Dendritic cell treated with granulocyte-macrophage colony-stimulating factor and Interleukin-4, amounts not matched to agents 40 ng/mL and 50 ng/mL, for 4 days (primary cell): ENCODE measurements at regions of chr5 and their contacts with region 1.

Region 1: DNA sequence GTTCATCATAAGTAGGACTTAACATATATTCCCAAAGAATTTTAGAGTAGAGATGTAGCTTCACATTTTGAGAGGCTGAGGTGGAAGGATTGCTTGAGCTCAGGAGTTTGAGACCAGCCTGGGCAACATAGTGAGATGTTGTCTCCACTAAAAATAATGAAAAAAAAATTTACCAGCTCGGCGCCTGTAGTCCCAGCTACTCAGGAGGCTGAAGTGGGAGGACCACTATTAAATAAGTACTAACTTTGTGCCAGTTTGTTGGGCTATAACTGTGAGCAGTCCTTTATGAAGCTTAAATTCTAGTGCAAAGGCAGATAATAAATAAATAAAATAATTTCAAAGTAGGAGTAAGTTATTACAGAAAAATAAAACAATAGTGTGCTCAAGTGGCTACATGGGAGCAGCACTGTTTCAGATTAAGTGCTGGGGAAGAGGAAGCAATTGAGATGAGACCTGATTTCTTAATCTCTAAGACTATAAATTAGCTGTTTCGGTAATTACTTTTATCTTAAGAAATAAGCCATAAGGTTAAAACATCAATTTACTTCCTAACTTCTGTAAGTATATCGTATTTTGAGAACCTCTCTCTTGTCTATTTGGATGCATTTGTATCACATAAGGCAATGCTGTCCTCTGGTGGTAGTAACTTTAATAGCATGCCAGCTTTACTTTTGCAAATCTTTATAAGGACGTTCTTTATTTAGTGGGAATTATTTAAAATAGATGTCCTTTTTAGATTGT is 98.9 kb downstream of the CSNK1G3 start:
- H3K4me3 Mint-ChIP-seq: no peak overlapping the region
- H3K27ac Mint-ChIP-seq: no peak overlapping the region
- H3K4me1 Mint-ChIP-seq: peaks cover 9% of the 10 kb centered on the region
- H3K27me3 Mint-ChIP-seq: no peaks in the 10 kb centered on the region

Region 2: DNA sequence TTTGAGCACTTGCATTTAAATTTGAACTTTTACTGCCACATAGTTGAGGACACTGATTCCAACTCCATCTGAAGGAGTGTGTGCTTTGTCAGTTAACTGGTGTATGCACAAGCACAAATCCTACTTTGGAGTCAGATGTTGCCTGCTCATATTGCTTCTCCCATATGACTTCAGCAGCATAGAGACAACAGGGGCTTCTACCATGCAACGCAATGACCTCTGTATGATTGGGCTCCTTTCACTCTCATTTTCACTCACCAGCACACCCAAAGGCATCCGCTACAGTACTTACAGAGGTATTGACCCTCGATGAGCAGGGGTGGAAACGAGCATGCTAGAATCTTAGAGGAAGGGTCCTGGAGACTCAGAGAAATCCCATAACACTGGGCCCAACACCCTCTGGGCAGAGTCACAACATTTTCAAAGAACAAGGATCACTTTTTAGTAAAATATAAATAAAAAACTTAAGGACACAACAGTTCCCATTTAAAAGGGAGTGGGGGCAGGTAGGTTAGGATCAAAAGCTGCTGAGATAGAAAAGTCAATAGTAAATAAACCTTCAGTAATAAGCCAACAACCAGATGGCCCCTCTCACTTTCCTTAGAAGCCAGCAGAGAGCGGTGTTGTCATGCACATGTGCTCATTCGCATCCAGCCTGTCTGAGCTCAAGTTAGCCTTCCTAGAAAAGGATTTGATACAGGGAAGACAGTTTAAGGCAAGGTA is 1095.0 kb before region 1 on chr5:
- intact Hi-C with region 1: loop called (anchors 5 kb)
- H3K4me3 Mint-ChIP-seq: no peak overlapping the region
- H3K27ac Mint-ChIP-seq: no peak overlapping the region
- H3K4me1 Mint-ChIP-seq: no peaks in the 10 kb centered on the region
- H3K27me3 Mint-ChIP-seq: no peaks in the 10 kb centered on the region

Region 3: DNA sequence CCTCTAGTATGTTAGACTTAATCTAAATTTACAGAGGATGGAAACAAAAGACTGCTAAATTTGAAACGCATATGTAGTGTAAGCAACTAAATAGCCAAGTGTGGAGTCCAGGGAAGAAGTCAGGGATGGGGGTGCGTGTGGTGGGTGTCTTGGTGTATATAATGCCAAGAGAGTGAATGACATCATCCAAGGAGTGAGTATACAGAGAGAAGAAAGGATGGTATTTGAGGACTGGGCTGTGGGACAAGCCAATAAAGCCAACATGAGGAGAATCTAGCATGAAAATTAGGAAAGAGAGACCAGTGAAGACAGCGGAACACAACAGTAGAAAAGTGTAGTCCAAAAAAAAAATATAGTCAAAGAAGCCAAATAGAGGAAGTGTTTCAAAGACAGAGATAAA is 232.1 kb before region 1 on chr5:
- intact Hi-C with region 1: loop called (anchors 5 kb)
- H3K4me3 Mint-ChIP-seq: no peak overlapping the region
- H3K27ac Mint-ChIP-seq: no peak overlapping the region
- H3K4me1 Mint-ChIP-seq: no peaks in the 10 kb centered on the region
- H3K27me3 Mint-ChIP-seq: no peaks in the 10 kb centered on the region

Region 4: GRCh38 chr5:123423278-123424149 is 187.3 kb before region 1 on chr5 and contains the start of gene CEP120:
- intact Hi-C with region 1: loop called (anchors 5 kb)
- H3K4me3 Mint-ChIP-seq: no peak within 1 kb of the TSS
- H3K27ac Mint-ChIP-seq: no peak within 1 kb of the TSS
- H3K4me1 Mint-ChIP-seq: peaks cover 18% of the 10 kb centered on the region
- H3K27me3 Mint-ChIP-seq: no peaks in the 10 kb centered on the region

Region 5: GRCh38 chr5:123690821-123691220 is 80.0 kb after region 1 on chr5:
- intact Hi-C with region 1: no loop called
- H3K4me3 Mint-ChIP-seq: no peak overlapping the region
- H3K27ac Mint-ChIP-seq: no peak overlapping the region
- H3K4me1 Mint-ChIP-seq: no peaks in the 10 kb centered on the region
- H3K27me3 Mint-ChIP-seq: no peaks in the 10 kb centered on the region

Region 6: DNA sequence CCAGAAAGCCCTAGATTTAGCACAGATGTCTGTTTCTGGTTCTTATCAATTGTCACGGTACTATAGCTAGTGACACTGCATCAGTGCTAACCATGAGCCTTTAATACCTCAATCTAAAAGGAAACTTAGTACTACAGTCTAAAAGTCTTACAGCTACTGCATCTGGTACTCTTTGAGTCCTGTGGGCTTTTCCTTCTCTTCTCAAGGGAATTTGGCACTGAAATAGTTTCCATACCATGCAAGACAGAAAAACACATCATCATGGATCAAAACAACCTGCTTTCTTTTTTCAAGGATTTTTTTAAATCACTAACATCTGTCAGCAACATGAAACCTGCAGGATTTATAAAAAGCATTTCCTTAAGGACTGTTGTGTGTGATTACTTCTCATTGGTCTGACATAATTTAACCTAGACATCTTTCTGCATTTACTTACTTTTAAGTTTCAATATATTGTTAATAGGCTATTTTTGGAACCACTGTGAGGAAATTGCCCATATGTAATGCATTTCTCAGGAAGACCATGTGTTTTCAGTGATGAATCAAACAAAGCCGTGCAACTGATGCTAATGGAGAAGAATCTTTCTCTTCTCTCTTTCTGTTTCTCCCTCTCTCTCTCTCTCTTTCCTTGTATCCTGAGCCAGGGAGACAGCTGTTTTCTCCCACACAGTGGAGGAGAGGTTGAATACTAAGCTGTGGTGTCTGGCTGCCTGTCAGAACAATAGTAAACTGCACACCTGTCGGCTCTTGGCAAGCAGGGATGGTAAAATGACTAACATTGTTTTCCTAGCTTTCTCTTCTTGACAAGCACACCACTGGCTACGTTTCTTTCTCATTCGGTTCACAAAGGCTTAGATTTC is 174.6 kb after region 1 on chr5:
- intact Hi-C with region 1: no loop called
- H3K4me3 Mint-ChIP-seq: no peak overlapping the region
- H3K27ac Mint-ChIP-seq: no peak overlapping the region
- H3K4me1 Mint-ChIP-seq: no peaks in the 10 kb centered on the region
- H3K27me3 Mint-ChIP-seq: no peaks in the 10 kb centered on the region